ENCODE measurements at regions of chr15 and their contacts with region 1.

Region 1: DNA sequence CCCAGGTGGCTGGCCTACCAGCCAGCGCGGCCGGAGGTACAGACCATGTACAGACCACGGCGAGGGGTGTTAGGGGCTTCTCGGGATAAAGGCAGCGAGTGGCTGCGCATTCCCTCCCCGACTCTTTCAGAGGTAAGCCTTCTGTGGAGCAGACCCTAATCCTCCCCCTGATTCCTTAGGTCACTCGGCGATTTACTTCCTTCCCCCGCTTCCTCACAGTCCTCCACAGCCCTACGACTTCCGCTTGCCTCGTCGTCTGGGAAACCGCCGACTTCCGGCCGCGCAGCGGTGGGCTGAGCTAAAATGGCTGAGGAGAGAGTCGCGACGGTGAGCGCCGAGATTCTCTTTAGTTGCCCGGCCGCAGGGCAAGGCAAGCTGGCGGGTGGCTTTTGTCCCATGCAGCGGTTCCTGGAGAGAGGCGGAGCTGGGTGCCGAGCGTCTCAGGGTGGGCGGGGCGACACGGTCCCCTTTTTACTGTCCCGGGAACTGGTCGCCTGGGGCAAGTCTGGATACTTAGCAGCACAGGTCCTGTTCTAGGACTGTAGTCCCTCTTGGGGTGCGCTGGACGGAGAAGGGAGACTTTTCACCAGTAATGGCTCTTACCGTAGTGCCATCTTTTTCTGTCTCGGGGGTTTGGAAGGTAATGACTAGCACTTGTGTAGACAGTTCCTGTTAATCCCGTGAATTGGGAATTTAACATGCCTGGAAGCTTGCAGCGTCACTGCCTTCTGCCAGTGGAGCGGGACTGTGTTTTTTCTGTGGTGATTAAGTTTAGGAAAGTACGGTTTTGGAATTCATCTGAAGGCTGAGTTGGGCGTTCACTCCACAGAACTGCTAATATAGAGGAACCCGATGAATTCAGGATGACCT is at the starts of genes BBS4 and HIGD2B:
- DNase-seq: peak; percentile 84
- H3K4me3 Mint-ChIP-seq: peak within 1 kb of the TSS; percentile 93
- H3K27ac Mint-ChIP-seq: peak within 1 kb of the TSS; percentile 87
- H3K4me1 Mint-ChIP-seq: peaks cover 21% of the 10 kb centered on the region
- H3K27me3 Mint-ChIP-seq: peaks cover 4% of the 10 kb centered on the region
- total RNA-seq, gene BBS4: 10.0 and 10.3 TPM in 2 replicates
- total RNA-seq, gene HIGD2B: 0.29 TPM in 1 of 2 replicates, not detected in the other

Region 2: GRCh38 chr15:72117486-72118399 is 568.4 kb before region 1 on chr15 and contains the start of gene MYO9A:
- intact Hi-C with region 1: loop called (anchors 2 kb)
- DNase-seq: peak; percentile 95
- H3K4me3 Mint-ChIP-seq: peak within 1 kb of the TSS; percentile 93
- H3K27ac Mint-ChIP-seq: peak within 1 kb of the TSS; percentile 95
- H3K4me1 Mint-ChIP-seq: peaks cover 23% of the 10 kb centered on the region
- H3K27me3 Mint-ChIP-seq: peaks cover 16% of the 10 kb centered on the region
- total RNA-seq, gene MYO9A: 15.2 and 16.4 TPM in 2 replicates

Region 3: GRCh38 chr15:72404841-72405240 is 281.3 kb before region 1 on chr15:
- intact Hi-C with region 1: no loop called
- DNase-seq: no peak
- H3K4me3 Mint-ChIP-seq: no peak overlapping the region
- H3K27ac Mint-ChIP-seq: no peak overlapping the region
- H3K4me1 Mint-ChIP-seq: no peaks in the 10 kb centered on the region
- H3K27me3 Mint-ChIP-seq: peaks cover 41% of the 10 kb centered on the region

Region 4: DNA sequence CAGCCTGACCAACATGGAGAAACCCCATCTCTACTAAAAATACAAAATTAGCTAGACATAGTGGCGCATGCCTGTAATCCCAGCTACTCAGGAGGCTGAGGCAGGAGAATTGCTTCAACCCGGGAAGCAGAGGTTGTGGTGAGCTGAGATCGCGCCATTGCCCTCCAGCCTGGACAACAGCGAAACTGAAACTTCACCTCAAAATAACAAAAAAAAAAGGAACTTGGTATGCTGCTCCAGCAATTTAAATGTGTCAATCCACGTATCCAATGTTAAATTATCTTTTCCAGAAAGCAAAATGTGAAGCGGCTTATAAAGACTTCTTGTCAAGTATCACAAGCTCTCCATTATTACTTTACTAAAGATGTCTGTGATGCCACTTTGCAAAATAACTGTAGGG is 221.9 kb before region 1 on chr15:
- intact Hi-C with region 1: no loop called
- DNase-seq: no peak
- H3K4me3 Mint-ChIP-seq: no peak overlapping the region
- H3K27ac Mint-ChIP-seq: no peak overlapping the region
- H3K4me1 Mint-ChIP-seq: peaks cover 10% of the 10 kb centered on the region
- H3K27me3 Mint-ChIP-seq: peaks cover 4% of the 10 kb centered on the region

Region 5: GRCh38 chr15:72599855-72600464 is 86.2 kb before region 1 on chr15:
- intact Hi-C with region 1: loop called (anchors 5 kb)
- DNase-seq: no peak
- H3K4me3 Mint-ChIP-seq: no peak overlapping the region
- H3K27ac Mint-ChIP-seq: no peak overlapping the region
- H3K4me1 Mint-ChIP-seq: no peaks in the 10 kb centered on the region
- H3K27me3 Mint-ChIP-seq: peaks cover 2% of the 10 kb centered on the region

Region 6: GRCh38 chr15:72740219-72740618 is 54.1 kb after region 1 on chr15:
- intact Hi-C with region 1: loop called (anchors 5 kb)
- DNase-seq: no peak
- H3K4me3 Mint-ChIP-seq: peak overlapping the region; percentile 26
- H3K27ac Mint-ChIP-seq: peak overlapping the region; percentile 41
- H3K4me1 Mint-ChIP-seq: peaks cover 39% of the 10 kb centered on the region
- H3K27me3 Mint-ChIP-seq: no peaks in the 10 kb centered on the region

Region 7: GRCh38 chr15:73051811-73052678 is 365.9 kb after region 1 on chr15 and contains the start of gene NEO1:
- intact Hi-C with region 1: loop called (anchors 5 kb)
- DNase-seq: peak; percentile 74
- H3K4me3 Mint-ChIP-seq: peak within 1 kb of the TSS; percentile 82
- H3K27ac Mint-ChIP-seq: peak within 1 kb of the TSS; percentile 64
- H3K4me1 Mint-ChIP-seq: peaks cover 8% of the 10 kb centered on the region
- H3K27me3 Mint-ChIP-seq: peaks cover 27% of the 10 kb centered on the region
- total RNA-seq, gene NEO1: 5.6 and 9.1 TPM in 2 replicates

Measured in activated T-helper 1 cell treated with anti-CD3 and anti-CD28 coated beads, Interleukin-12 subunit alpha, Interleukin-12 subunit beta, Interleukin-2, Interleukin-4 antibody, amounts not matched to agents 30 ng/mL and 10 ng/mL and 1 ng/mL, durations not matched to agents 14 hours and 24 hours and 36 hours (primary cell).